ENCODE measurements at regions of chr6 and their contacts with region 1.

Region 1: GRCh38 chr6:117482240-117483003 is at the start of gene DCBLD1:
- DNase-seq: peak; percentile 70
- ATAC-seq: peak; percentile 91
- H3K4me3 ChIP-seq: peak within 1 kb of the TSS; percentile 98
- H3K27ac ChIP-seq: peak within 1 kb of the TSS; percentile 87
- H3K4me1 ChIP-seq: peaks cover 2% of the 10 kb centered on the region; the same call in 1 of the 2 replicates
- H3K27me3 ChIP-seq: no peaks in the 10 kb centered on the region
- CTCF ChIP-seq: 0 out of 2 replicates have a peak, but pooled peaks have one; percentile 4
- POLR2A ChIP-seq: peak; percentile 68
- RAD21 ChIP-seq: no peak
- total RNA-seq, gene DCBLD1: 27.8 and 30.0 TPM in 2 replicates

Region 2: DNA sequence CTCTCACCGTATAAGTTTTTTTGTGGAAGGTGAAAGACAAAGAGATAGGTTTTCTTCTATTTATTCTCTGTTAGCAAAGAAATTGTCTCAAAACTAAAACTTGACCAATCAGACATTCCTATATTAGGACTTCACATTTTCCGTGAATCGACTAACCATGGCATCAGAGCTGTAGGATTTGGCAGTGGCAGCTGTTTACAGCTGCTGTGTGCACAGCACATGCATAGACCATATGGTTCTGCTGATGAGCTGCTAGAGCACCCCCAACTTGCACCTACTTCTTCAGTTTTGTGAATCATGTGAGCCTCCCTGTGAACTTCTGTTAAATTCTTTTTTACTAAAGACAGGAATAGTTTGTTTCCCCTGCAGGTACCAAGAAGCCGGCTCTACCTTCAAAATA is 447.5 kb before region 1 on chr6:
- CTCF ChIA-PET with region 1: no interaction called
- POLR2A ChIA-PET with region 1: no interaction called
- dilution Hi-C with region 1: no loop called
- in situ Hi-C with region 1: no loop called
- intact Hi-C with region 1: no loop called
- DNase-seq: no peak
- ATAC-seq: no peak
- H3K4me3 ChIP-seq: no peak overlapping the region
- H3K27ac ChIP-seq: no peak overlapping the region
- H3K4me1 ChIP-seq: no peaks in the 10 kb centered on the region
- H3K27me3 ChIP-seq: no peaks in the 10 kb centered on the region
- CTCF ChIP-seq: no peak
- POLR2A ChIP-seq: no peak
- RAD21 ChIP-seq: no peak

Region 3: GRCh38 chr6:117469356-117469755 is 13.1 kb before region 1 on chr6:
- CTCF ChIA-PET with region 1: no interaction called
- POLR2A ChIA-PET with region 1: no interaction called
- dilution Hi-C with region 1: no loop called
- in situ Hi-C with region 1: no loop called
- intact Hi-C with region 1: no loop called
- DNase-seq: no peak
- ATAC-seq: no peak
- H3K4me3 ChIP-seq: no peak overlapping the region
- H3K27ac ChIP-seq: no peak overlapping the region
- H3K4me1 ChIP-seq: peaks cover 6% of the 10 kb centered on the region; the same call in 1 of the 2 replicates
- H3K27me3 ChIP-seq: no peaks in the 10 kb centered on the region; the same call in 1 of the 2 replicates
- CTCF ChIP-seq: no peak
- POLR2A ChIP-seq: no peak
- RAD21 ChIP-seq: no peak

Region 4: GRCh38 chr6:117547688-117548621 is 65.5 kb after region 1 on chr6:
- CTCF ChIA-PET with region 1: interaction called, 4 read pairs
- POLR2A ChIA-PET with region 1: no interaction called
- dilution Hi-C with region 1: no loop called
- in situ Hi-C with region 1: no loop called
- intact Hi-C with region 1: loop called (anchors 2 kb)
- DNase-seq: peak; percentile 54
- ATAC-seq: peak; percentile 44
- H3K4me3 ChIP-seq: no peak overlapping the region
- H3K27ac ChIP-seq: peak overlapping the region; percentile 74
- H3K4me1 ChIP-seq: peaks cover 22% of the 10 kb centered on the region
- H3K27me3 ChIP-seq: no peaks in the 10 kb centered on the region
- CTCF ChIP-seq: no peak
- POLR2A ChIP-seq: no peak
- RAD21 ChIP-seq: no peak

Region 5: DNA sequence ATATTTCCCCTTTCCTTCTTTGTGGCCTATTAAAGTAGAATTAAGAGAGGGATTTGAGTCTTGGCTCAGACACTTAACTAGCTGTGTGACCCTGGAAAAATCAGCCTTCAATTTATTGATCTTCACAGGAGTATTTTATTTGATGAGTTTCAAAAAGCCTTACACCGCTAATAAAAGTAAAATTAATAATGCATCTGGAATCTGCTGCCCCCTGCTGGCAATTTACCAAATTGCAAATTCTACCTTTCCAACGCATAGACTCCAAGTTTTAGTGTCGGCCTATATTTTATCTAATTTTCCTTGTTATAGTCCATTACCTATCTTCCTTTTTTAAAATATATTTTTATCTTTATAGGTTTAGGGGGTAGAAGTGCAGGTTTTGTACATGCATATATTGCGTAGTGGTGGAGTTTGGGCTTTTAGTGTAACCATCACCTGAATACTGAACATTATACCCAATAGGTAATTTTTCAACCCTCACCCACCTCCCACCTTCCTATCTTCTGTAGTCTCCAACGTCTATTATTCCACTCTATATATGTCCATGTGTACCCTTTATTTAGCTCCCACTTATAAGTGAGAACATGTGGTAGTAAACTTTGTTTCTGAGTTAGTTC is 73.6 kb after region 1 on chr6:
- CTCF ChIA-PET with region 1: interaction called, 7 read pairs
- POLR2A ChIA-PET with region 1: no interaction called
- dilution Hi-C with region 1: no loop called
- in situ Hi-C with region 1: no loop called
- intact Hi-C with region 1: loop called (anchors 2 kb)
- DNase-seq: peak; percentile 31
- ATAC-seq: peak; percentile 59
- H3K4me3 ChIP-seq: no peak overlapping the region
- H3K27ac ChIP-seq: no peak overlapping the region
- H3K4me1 ChIP-seq: peaks cover 2% of the 10 kb centered on the region; the same call in 1 of the 2 replicates
- H3K27me3 ChIP-seq: no peaks in the 10 kb centered on the region
- CTCF ChIP-seq: peak; percentile 82
- POLR2A ChIP-seq: no peak
- RAD21 ChIP-seq: peak; percentile 75